HepG2 (cell line): ENCODE measurements at regions of chr20 and their contacts with region 1.

Region 1: DNA sequence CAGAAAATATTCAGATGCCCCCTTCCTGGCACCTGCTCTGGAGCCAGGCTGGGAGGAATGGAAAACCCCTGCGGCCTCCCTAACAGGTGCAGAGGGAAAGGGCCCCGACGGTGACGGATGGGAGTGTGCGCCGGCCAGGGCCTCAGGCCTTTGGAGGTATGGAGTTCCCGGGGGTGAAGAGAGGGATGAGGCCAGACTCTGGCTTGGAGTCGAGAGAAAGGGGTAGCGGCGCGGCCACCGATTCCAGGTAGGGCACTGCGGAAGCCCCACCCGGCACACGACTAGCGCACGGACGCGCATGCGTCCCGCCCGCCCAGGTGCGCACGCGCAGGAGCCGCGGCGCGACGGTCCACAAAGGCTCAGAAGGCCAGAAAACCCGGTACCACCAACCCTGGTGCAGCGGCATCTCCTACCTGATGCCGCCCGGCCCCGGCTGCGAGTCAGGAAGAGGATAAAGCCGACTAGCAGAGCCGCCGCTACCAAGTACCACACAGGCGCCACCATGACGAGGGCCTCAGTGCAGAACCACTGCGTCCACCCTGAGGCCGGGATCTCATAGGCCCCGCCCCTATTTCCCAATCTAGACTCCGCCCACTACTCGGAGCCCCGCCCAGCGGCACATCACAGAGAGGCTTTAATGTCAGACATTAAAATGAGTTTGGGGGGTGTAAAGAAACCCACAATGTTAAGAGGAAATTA is at the start of gene DDRGK1:
- DNase-seq: peak; percentile 85
- ATAC-seq: peak; percentile 84
- H3K4me3 ChIP-seq: peak within 1 kb of the TSS; percentile 76 to 98 (median 81)
- H3K27ac ChIP-seq: peak within 1 kb of the TSS; percentile 87
- H3K4me1 ChIP-seq: peaks cover 34% of the 10 kb centered on the region
- H3K27me3 ChIP-seq: peaks cover 0 to 6% of the 10 kb centered on the region in 2 experiments; a peak in 1 of 5 replicates
- CTCF ChIP-seq: peak; percentile 17; the same call in 1 of the 2 replicates
- EP300 ChIP-seq: no peak
- POLR2A ChIP-seq: peak; percentile 96
- RAD21 ChIP-seq: peak; percentile 73
- total RNA-seq, gene DDRGK1: 75.4 and 149 TPM in 2 replicates

Region 2: GRCh38 chr20:3021327-3021726 is 182.9 kb before region 1 on chr20:
- CTCF ChIA-PET with region 1: no interaction called
- POLR2A ChIA-PET with region 1: no interaction called
- in situ Hi-C with region 1: no loop called
- intact Hi-C with region 1: no loop called
- DNase-seq: no peak
- ATAC-seq: peak; percentile 26
- H3K4me3 ChIP-seq: no peak overlapping the region
- H3K27ac ChIP-seq: no peak overlapping the region
- H3K4me1 ChIP-seq: peaks cover 36% of the 10 kb centered on the region
- H3K27me3 ChIP-seq: no peaks in the 10 kb centered on the region
- CTCF ChIP-seq: no peak
- EP300 ChIP-seq: no peak
- POLR2A ChIP-seq: no peak
- RAD21 ChIP-seq: no peak

Region 3: DNA sequence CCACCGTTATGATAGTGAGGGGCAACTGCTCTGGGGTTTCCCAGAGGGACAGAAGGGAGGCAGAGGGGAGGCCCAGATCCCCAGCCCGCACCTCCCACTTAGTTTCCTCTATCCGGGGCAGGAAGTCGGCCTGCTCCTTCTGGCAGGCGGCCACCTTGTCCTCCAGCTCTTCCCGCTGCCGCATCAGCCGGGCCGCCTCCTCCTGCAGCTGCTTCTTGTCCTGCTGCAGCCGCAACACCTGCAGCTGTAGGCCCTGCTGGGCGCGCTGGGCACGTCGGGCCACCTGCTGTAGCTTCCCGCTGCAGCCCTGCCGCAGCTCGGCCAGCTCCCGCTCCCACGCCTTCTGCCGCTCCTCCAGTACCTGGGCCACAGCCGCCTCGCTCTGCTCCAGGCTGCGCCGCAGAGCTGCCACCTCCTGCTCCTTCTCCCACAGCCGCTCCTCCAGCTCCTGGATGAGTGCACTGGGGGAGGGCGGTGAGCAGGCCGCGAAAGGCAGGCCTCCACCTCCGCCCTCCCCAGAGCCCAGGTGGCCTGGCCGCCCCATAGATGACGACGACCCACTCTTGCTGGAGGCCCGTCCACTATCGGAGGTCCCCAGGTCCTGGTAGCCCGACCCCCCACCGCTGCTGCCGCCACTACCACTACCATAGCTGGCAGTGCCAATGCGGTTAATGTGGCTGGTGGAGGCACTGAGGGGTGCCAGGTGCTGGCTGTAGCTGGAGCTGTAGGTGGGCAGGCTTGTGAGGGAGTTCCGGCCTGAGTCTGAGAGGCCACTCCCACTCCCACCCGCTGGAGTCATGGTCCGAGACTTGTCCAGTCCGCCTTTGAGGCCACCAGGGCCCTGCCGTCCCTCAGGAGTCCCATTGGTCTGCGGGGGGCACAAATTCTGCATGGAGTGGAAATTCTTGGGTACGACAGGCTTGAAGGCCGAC is 38.6 kb before region 1 on chr20:
- CTCF ChIA-PET with region 1: no interaction called
- POLR2A ChIA-PET with region 1: interaction called, 13 read pairs
- in situ Hi-C with region 1: no loop called
- intact Hi-C with region 1: no loop called
- DNase-seq: no peak
- ATAC-seq: no peak
- H3K4me3 ChIP-seq: no peak overlapping the region
- H3K27ac ChIP-seq: no peak overlapping the region
- H3K4me1 ChIP-seq: peaks cover 68% of the 10 kb centered on the region
- H3K27me3 ChIP-seq: no peaks in the 10 kb centered on the region
- CTCF ChIP-seq: no peak
- EP300 ChIP-seq: no peak
- POLR2A ChIP-seq: no peak
- RAD21 ChIP-seq: no peak

Region 4: DNA sequence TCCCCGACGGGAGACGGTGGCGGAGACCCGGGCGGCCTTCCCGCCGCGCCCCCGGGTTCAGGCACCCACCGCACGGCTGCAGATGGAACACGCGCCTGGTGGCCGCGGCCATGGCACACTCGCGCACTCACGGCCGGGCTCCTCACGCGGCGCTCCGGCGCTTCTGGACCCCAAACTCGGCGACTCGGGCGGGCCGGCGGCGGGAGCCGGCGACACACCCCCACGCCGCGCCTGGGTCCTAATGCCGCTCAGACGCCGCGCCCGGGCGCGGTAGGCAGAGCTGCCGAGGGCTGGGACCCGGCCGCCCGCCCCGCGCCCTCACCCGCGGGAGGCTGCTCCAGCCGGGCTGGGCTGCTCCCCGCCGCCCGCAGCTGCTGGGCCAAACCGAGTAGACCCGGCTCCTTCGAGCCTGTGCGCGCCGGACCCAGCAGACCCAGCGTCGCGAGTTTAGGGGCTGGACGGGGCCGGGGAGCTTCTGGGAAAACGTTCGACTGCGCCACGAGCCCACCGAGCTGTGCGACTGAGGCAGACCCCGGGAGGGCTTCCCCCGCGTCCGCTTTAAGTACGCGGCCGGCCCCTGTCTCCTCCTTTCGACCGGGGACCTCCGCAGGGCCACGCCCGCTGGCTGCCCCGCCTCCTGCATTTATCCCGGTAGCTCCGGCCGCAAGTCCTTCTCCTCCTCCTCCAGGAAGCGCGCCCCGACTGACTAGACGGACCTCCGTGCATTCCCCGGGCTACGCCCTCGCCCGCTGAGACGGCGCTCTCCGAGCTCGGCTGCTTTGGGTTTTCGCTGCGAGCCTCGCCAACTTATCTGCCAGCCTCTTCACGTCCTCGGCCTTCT is 35.0 kb after region 1 on chr20 and contains the start of gene SLC4A11:
- CTCF ChIA-PET with region 1: no interaction called
- POLR2A ChIA-PET with region 1: interaction called, 9 read pairs
- in situ Hi-C with region 1: no loop called
- intact Hi-C with region 1: loop called (anchors 1 kb)
- DNase-seq: peak; percentile 56
- ATAC-seq: peak; percentile 59
- H3K4me3 ChIP-seq: peak within 1 kb of the TSS; percentile 59 to 83 (median 83)
- H3K27ac ChIP-seq: no peak within 1 kb of the TSS
- H3K4me1 ChIP-seq: peaks cover 66% of the 10 kb centered on the region
- H3K27me3 ChIP-seq: peaks cover 6 to 40% of the 10 kb centered on the region in 2 experiments
- CTCF ChIP-seq: no peak
- EP300 ChIP-seq: no peak
- POLR2A ChIP-seq: no peak
- RAD21 ChIP-seq: peak; percentile 39; the same call in 1 of the 2 replicates
- total RNA-seq, gene SLC4A11: 1.1 and 3.9 TPM in 2 replicates